Gastrocnemius medialis (tissue), 4 donors: ENCODE measurements at regions of chr7 and their contacts with region 1.

Region 1: GRCh38 chr7:75914730-75915585 is at the start of gene POR:
- DNase-seq: peak; percentile 89 to 93
- ATAC-seq: peak; percentile 86 to 88
- H3K4me3 ChIP-seq: peak within 1 kb of the TSS; percentile 96 to 100 (median 98)
- H3K27ac ChIP-seq: peak within 1 kb of the TSS; percentile 95 to 99 (median 96)
- H3K4me1 ChIP-seq: peaks cover 32 to 35% of the 10 kb centered on the region in 2 donors
- H3K27me3 ChIP-seq: no peaks in the 10 kb centered on the region
- CTCF ChIP-seq: peak in 3 of 5 experiments; percentile 13 to 57 (median 22)
- POLR2A ChIP-seq: peak; percentile 99 to 100
- total RNA-seq, gene POR: 85.7 to 218 (median 115) TPM

Region 2: GRCh38 chr7:75878769-75879611 is 36.0 kb before region 1 on chr7 and contains the start of gene RHBDD2:
- in situ Hi-C with region 1: no loop called
- intact Hi-C with region 1: loop called (anchors 2 kb)
- DNase-seq: peak; percentile 92 to 95
- ATAC-seq: peak; percentile 96 to 97
- H3K4me3 ChIP-seq: peak within 1 kb of the TSS; percentile 75 to 95 (median 86)
- H3K27ac ChIP-seq: peak within 1 kb of the TSS; percentile 75 to 87 (median 83)
- H3K4me1 ChIP-seq: peaks cover 15 to 19% of the 10 kb centered on the region in 2 donors
- H3K27me3 ChIP-seq: no peaks in the 10 kb centered on the region
- CTCF ChIP-seq: peak in 3 of 5 experiments; percentile 30 to 41 (median 41)
- POLR2A ChIP-seq: peak; percentile 93
- total RNA-seq, gene RHBDD2: 28.5 to 52.1 (median 38.2) TPM

Region 3: DNA sequence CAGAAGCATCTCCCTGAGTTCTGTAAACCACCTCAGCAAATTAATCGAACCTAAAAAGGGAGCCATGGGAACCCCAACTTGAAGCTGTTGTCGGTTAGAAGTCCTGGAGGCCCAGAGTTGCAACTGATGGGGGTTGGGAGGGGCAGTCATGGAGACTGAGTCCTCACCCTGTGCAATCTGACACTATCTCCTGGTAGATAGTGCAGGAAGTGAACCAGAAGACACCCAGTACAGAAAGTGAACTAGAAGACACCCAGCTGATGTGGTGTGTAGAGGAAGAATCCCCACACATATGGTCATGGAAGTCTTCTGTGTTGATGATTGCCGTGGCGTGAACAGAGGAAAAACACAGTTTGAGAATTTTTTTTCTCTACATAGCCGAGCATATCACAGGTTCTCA is 227.9 kb after region 1 on chr7:
- in situ Hi-C with region 1: no loop called
- intact Hi-C with region 1: no loop called
- DNase-seq: no peak
- ATAC-seq: no peak
- H3K4me3 ChIP-seq: no peak overlapping the region
- H3K27ac ChIP-seq: no peak overlapping the region
- H3K4me1 ChIP-seq: no peaks in the 10 kb centered on the region
- H3K27me3 ChIP-seq: no peaks in the 10 kb centered on the region
- CTCF ChIP-seq: no peak
- POLR2A ChIP-seq: no peak